Activated B cell treated with CpG ODN at 0.5 μM for 24 hours (primary cell): ENCODE measurements at regions of chr10 and their contacts with region 1.

Region 1: GRCh38 chr10:36765782-36766414 is 359.5 kb upstream of the ANKRD30A start:
- DNase-seq: no peak
- ATAC-seq: no peak
- H3K4me3 Mint-ChIP-seq: no peak overlapping the region
- H3K27ac Mint-ChIP-seq: no peak overlapping the region
- H3K4me1 Mint-ChIP-seq: no peaks in the 10 kb centered on the region
- H3K27me3 Mint-ChIP-seq: no peaks in the 10 kb centered on the region
- CTCF ChIP-seq: no peak

Region 2: DNA sequence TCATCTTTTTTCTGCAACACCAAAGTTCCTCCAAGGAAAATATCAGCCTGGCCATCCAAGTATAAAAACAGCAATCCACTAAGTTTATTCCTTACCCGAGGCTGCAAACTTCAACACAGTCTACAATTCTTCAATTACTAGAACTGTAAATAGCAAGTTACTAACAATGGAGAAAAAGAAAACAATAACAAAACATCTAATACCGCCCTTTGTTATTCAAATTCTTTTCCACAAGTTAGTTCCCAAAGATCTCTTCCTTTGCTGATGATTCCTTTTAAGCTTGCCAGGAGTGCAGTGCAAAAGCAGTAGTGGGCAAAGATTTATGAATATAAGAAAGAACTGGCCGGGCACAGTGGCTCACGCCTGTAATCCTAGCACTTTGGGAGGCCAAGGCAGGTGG is 1762.0 kb before region 1 on chr10:
- CTCF ChIA-PET with region 1: no interaction called
- POLR2A ChIA-PET with region 1: interaction called, 10 read pairs
- intact Hi-C with region 1: no loop called
- DNase-seq: no peak
- ATAC-seq: no peak
- H3K4me3 Mint-ChIP-seq: no peak overlapping the region
- H3K27ac Mint-ChIP-seq: no peak overlapping the region
- H3K4me1 Mint-ChIP-seq: no peaks in the 10 kb centered on the region
- H3K27me3 Mint-ChIP-seq: no peaks in the 10 kb centered on the region
- CTCF ChIP-seq: no peak

Region 3: GRCh38 chr10:36692759-36693158 is 73.1 kb before region 1 on chr10:
- CTCF ChIA-PET with region 1: no interaction called
- POLR2A ChIA-PET with region 1: no interaction called
- intact Hi-C with region 1: no loop called
- DNase-seq: no peak
- ATAC-seq: no peak
- H3K4me3 Mint-ChIP-seq: no peak overlapping the region
- H3K27ac Mint-ChIP-seq: no peak overlapping the region
- H3K4me1 Mint-ChIP-seq: no peaks in the 10 kb centered on the region
- H3K27me3 Mint-ChIP-seq: no peaks in the 10 kb centered on the region
- CTCF ChIP-seq: no peak